ENCODE measurements at regions of chr5 and their contacts with region 1.

Region 1: DNA sequence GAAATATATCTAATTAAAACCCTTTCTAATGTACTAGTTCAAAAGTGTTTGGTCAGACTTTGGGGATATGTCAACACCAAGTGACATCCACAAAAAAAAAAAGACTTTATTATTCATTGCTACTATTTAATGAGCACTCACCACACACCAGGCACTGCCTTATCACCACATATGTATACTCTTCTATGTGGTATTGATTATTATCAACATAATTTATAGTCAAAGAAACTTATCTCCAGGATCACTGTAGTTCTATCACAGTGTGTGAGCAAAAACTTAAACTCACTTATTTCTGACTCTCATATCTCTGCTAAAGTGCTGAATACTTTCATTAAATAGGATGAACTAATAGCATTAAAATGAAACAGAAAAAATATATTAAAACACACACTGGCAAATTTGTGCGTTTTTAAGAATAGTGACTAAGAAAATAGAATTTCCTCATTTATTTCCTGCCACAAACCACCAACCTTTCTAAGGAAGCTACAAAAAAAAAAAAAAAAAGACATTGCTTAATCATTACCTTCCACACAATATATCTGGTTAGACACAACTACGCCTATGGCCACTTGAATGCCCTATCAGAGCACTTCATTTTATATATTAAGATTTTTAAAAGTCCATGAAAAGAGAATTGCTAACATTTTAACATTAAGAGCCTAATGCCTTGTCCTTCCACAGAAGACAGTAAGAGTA is 12.8 kb downstream of the SLCO4C1 start:
- DNase-seq: peak in 1 of 2 donors; percentile 6
- ATAC-seq: peak; percentile 48 to 59 (median 49)
- H3K4me3 ChIP-seq: no peak overlapping the region
- H3K4me3 Mint-ChIP-seq: peak overlapping the region; percentile 79
- H3K27ac ChIP-seq: no peak overlapping the region
- H3K27ac Mint-ChIP-seq: peak overlapping the region; percentile 69 to 73
- H3K4me1 ChIP-seq: no peaks in the 10 kb centered on the region
- H3K4me1 Mint-ChIP-seq: peaks cover 59 to 65% of the 10 kb centered on the region in 2 donors
- H3K27me3 ChIP-seq: no peaks in the 10 kb centered on the region
- H3K27me3 Mint-ChIP-seq: no peaks in the 10 kb centered on the region
- CTCF ChIP-seq: no peak

Region 2: GRCh38 chr5:102296178-102296817 is 13.0 kb after region 1 on chr5 and contains the start of gene SLCO4C1:
- intact Hi-C with region 1: loop called (anchors 2 kb)
- DNase-seq: peak; percentile 70 to 86
- ATAC-seq: peak; percentile 89 to 95 (median 90)
- H3K4me3 ChIP-seq: peak within 1 kb of the TSS; percentile 66
- H3K4me3 Mint-ChIP-seq: peak within 1 kb of the TSS; percentile 97
- H3K27ac ChIP-seq: peak within 1 kb of the TSS; percentile 77
- H3K27ac Mint-ChIP-seq: peak within 1 kb of the TSS; percentile 85 to 95
- H3K4me1 ChIP-seq: peaks cover 22% of the 10 kb centered on the region
- H3K4me1 Mint-ChIP-seq: peaks cover 37 to 41% of the 10 kb centered on the region in 2 donors
- H3K27me3 ChIP-seq: no peaks in the 10 kb centered on the region
- H3K27me3 Mint-ChIP-seq: no peaks in the 10 kb centered on the region
- CTCF ChIP-seq: peak; percentile 37
- total RNA-seq, gene SLCO4C1: 30.9 to 44.7 (median 31.2) TPM

Region 3: DNA sequence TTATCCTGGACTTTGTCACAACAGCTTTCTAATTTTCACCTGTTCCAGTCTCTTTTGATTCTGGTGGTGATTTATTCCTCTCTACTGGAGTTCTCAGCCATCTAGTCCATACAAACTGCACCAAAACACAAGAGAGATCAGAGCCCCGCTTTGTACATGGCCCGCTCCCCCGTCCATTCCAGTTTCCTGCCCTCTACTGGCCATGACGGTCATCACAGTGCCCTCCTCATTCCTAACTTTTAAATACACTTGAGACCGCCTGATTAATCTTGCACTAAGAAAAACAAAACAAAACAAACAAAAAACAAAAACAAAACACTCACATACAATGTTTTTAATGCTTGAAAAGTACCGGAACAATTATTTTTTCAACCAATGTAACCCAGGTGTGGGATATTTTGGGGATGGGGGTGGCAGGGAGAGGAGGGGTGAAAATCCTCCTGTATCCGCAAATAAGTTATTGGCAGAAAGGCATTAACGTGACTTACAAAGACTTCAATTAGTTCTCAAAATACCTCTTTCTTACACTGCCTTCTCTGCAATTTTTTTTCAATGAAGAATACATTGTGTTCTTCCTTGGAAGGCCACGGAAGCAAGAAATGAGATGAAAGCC is 387.1 kb after region 1 on chr5:
- intact Hi-C with region 1: no loop called
- DNase-seq: no peak
- ATAC-seq: no peak
- H3K4me3 ChIP-seq: no peak overlapping the region
- H3K4me3 Mint-ChIP-seq: no peak overlapping the region
- H3K27ac ChIP-seq: no peak overlapping the region
- H3K27ac Mint-ChIP-seq: no peak overlapping the region
- H3K4me1 ChIP-seq: no peaks in the 10 kb centered on the region
- H3K4me1 Mint-ChIP-seq: no peaks in the 10 kb centered on the region
- H3K27me3 ChIP-seq: no peaks in the 10 kb centered on the region
- H3K27me3 Mint-ChIP-seq: peaks cover 0 to 2% of the 10 kb centered on the region in 2 donors
- CTCF ChIP-seq: no peak

Measured in natural killer cell (primary cell).